MCF 10A (cell line): ENCODE measurements at regions of chr9 and their contacts with region 1.

Region 1: DNA sequence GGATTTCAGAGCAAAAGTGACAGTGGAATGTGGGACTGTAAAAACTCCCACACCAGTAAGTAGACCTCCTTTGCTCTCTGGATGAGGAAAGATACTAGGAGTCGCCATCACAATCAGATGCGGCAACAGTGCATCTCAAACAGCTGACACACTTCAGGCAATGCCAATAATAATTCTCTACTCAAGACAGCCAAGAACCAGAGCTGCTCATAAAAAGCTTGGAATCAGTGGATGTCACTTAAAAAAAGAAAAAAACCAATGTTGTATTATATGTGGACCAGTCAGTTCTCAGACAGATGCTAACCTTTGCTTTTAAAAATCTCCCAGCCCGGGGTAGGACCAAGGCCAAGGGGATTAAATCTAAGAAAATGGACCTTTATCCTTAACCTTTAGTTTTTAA is 185.0 kb downstream of the GNA14 start:
- DNase-seq: no peak
- H3K4me3 Mint-ChIP-seq: no peak overlapping the region
- H3K27ac Mint-ChIP-seq: no peak overlapping the region
- H3K4me1 Mint-ChIP-seq: peaks cover under 1% of the 10 kb centered on the region
- H3K27me3 Mint-ChIP-seq: peaks cover 12% of the 10 kb centered on the region
- CTCF ChIP-seq: no peak

Region 2: DNA sequence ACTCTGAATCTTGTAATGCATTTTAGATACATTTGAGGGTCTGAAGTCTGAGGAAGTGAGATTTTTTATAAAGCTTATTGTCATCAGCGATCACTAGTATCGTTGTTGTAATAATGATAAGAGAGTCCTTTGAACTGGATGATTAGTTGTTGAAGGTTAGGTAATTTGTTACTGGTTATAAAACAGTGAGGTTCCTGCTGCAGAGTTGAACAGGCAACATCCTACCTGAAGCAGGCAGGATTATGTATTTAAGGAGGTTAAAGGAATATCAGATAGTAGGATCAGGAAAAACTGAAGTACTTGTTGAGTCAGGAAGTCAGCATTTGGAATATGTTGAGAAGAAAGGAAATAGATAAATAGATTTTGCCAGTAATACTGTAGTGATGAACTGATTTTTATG is 179.2 kb before region 1 on chr9:
- CTCF ChIA-PET with region 1: no interaction called
- POLR2A ChIA-PET with region 1: no interaction called
- intact Hi-C with region 1: no loop called
- DNase-seq: no peak
- H3K4me3 Mint-ChIP-seq: no peak overlapping the region
- H3K27ac Mint-ChIP-seq: no peak overlapping the region
- H3K4me1 Mint-ChIP-seq: no peaks in the 10 kb centered on the region
- H3K27me3 Mint-ChIP-seq: no peaks in the 10 kb centered on the region
- CTCF ChIP-seq: no peak

Region 3: DNA sequence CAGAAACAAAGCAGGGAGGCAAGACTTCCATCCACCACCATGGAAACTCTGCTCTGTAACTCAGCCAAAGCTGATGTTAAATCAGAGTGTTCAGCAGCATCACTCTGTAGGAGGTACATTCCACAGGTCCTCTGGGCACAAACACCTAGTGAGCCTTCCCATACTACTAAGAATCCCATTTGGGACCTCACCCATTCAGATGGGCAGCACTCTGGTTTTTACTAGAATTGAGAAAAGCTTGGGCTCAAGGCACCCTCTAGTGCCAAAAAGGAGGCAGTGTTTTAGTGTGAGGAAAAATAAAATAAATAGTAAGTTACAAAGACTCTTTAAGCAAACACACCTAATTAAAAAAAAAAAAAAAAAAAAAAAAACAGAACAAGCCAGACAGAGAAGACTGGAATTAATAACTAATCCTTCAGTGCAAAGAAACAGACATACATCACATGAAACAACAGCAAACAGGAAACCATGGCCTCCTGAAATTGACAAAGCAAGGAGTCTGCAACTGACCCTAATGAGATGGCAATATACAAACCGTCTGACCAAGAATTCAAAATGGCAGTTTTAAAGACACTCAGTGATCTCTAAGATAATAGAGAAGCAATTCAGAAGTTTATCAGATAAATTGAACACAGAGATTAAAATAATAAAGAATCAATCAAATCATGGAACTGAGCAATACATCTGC is 25.4 kb after region 1 on chr9:
- CTCF ChIA-PET with region 1: interaction called, 76 read pairs
- POLR2A ChIA-PET with region 1: no interaction called
- intact Hi-C with region 1: loop called (anchors 1 kb)
- DNase-seq: peak; percentile 41
- H3K4me3 Mint-ChIP-seq: no peak overlapping the region
- H3K27ac Mint-ChIP-seq: no peak overlapping the region
- H3K4me1 Mint-ChIP-seq: no peaks in the 10 kb centered on the region
- H3K27me3 Mint-ChIP-seq: no peaks in the 10 kb centered on the region
- CTCF ChIP-seq: peak; percentile 41

Region 4: GRCh38 chr9:77601476-77602099 is 138.4 kb after region 1 on chr9:
- CTCF ChIA-PET with region 1: no interaction called
- POLR2A ChIA-PET with region 1: no interaction called
- intact Hi-C with region 1: no loop called
- DNase-seq: no peak
- H3K4me3 Mint-ChIP-seq: no peak overlapping the region
- H3K27ac Mint-ChIP-seq: no peak overlapping the region
- H3K4me1 Mint-ChIP-seq: no peaks in the 10 kb centered on the region
- H3K27me3 Mint-ChIP-seq: no peaks in the 10 kb centered on the region
- CTCF ChIP-seq: no peak